ENCODE measurements at regions of chr11 and their contacts with region 1.

Region 1: DNA sequence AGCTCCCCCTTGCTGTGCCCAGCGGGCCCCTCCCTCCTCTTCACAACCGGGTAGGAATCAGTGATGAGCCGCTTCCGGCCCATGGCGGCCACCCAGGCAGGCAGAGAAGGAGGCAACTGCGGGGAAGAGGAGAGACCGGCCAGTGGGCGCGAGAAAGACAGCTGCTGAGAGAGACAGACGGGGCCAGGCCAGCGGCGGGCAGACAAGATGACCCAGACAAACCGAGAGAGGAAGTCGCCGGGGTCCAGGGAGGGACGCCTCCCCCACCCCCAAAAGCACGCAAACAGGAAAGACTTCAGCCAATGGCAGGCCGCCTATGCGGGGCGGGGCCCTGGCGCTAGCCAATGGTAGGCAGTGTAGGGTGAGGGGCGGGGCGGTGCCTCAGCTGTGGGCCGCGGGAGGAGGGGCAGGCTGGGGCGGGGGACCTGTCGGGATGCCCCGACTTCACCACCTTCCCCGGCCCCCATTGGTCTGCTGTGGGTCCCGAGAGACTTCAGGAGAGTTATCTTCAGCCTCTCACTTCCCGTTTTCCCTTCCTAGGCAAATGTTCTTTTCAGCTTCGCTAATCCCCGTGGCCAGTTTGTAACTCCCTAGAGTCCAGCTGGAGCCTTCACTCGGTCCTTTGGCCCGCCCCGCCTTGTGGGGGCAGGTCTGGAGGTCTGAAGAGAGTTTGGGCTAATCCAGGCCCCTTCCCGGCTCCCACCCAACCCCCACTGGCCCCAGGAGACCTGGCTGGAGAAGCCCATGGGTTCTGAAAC is at the start of gene POLD4:
- DNase-seq: peak; percentile 86
- H3K4me3 ChIP-seq: peak within 1 kb of the TSS; percentile 83
- H3K27ac ChIP-seq: peak within 1 kb of the TSS; percentile 97
- H3K27me3 ChIP-seq: no peaks in the 10 kb centered on the region
- CTCF ChIP-seq: no peak
- polyA plus RNA-seq, gene POLD4: 45.9 and 70.6 TPM in 2 replicates

Region 2: GRCh38 chr11:67146516-67147226 is 206.8 kb before region 1 on chr11:
- CTCF ChIA-PET with region 1: no interaction called
- POLR2A ChIA-PET with region 1: no interaction called
- DNase-seq: no peak
- H3K4me3 ChIP-seq: no peak overlapping the region
- H3K27ac ChIP-seq: no peak overlapping the region
- H3K27me3 ChIP-seq: no peaks in the 10 kb centered on the region
- CTCF ChIP-seq: no peak

Region 3: GRCh38 chr11:67317205-67317887 is 36.1 kb before region 1 on chr11:
- CTCF ChIA-PET with region 1: interaction called, 16 read pairs
- POLR2A ChIA-PET with region 1: interaction called, 6 read pairs
- DNase-seq: peak; percentile 82
- H3K4me3 ChIP-seq: peak overlapping the region; percentile 93
- H3K27ac ChIP-seq: peak overlapping the region; percentile 82
- H3K27me3 ChIP-seq: no peaks in the 10 kb centered on the region
- CTCF ChIP-seq: peak; percentile 95

Region 4: GRCh38 chr11:67337257-67337656 is 16.2 kb before region 1 on chr11:
- CTCF ChIA-PET with region 1: interaction called, 31 read pairs
- POLR2A ChIA-PET with region 1: interaction called, 7 read pairs
- DNase-seq: no peak
- H3K4me3 ChIP-seq: no peak overlapping the region
- H3K27ac ChIP-seq: no peak overlapping the region
- H3K27me3 ChIP-seq: no peaks in the 10 kb centered on the region
- CTCF ChIP-seq: no peak

Region 5: GRCh38 chr11:67373925-67374618 is 20.6 kb after region 1 on chr11:
- CTCF ChIA-PET with region 1: interaction called, 716 read pairs
- POLR2A ChIA-PET with region 1: interaction called, 106 read pairs
- DNase-seq: peak; percentile 86
- H3K4me3 ChIP-seq: peak overlapping the region; percentile 67
- H3K27ac ChIP-seq: peak overlapping the region; percentile 99
- H3K27me3 ChIP-seq: no peaks in the 10 kb centered on the region
- CTCF ChIP-seq: peak; percentile 34

Region 6: GRCh38 chr11:67391304-67392132 is 38.0 kb after region 1 on chr11 and contains the start of gene RAD9A:
- CTCF ChIA-PET with region 1: interaction called, 716 read pairs
- POLR2A ChIA-PET with region 1: interaction called, 5 read pairs
- DNase-seq: peak; percentile 81
- H3K4me3 ChIP-seq: peak within 1 kb of the TSS; percentile 92
- H3K27ac ChIP-seq: peak within 1 kb of the TSS; percentile 87
- H3K27me3 ChIP-seq: no peaks in the 10 kb centered on the region
- CTCF ChIP-seq: no peak
- polyA plus RNA-seq, gene RAD9A: 3.2 and 4.1 TPM in 2 replicates